Activated naive CD4-positive, alpha-beta T cell treated with anti-CD3 and anti-CD28 coated beads for 36 hours (primary cell): ENCODE measurements at regions of chr14 and their contacts with region 1.

Region 1: GRCh38 chr14:24188251-24189058 is at the start of gene IPO4:
- DNase-seq: peak; percentile 97
- H3K4me3 Mint-ChIP-seq: peak within 1 kb of the TSS; percentile 85
- H3K27ac Mint-ChIP-seq: peak within 1 kb of the TSS; percentile 78
- H3K4me1 Mint-ChIP-seq: peaks cover 46% of the 10 kb centered on the region
- H3K27me3 Mint-ChIP-seq: no peaks in the 10 kb centered on the region
- total RNA-seq, gene IPO4: 64.2 to 74.5 TPM

Region 2: GRCh38 chr14:24171422-24172260 is 16.8 kb before region 1 on chr14 and contains the start of gene REC8:
- CTCF ChIA-PET with region 1: no interaction called
- intact Hi-C with region 1: loop called (anchors 1 kb)
- DNase-seq: peak; percentile 72
- H3K4me3 Mint-ChIP-seq: peak within 1 kb of the TSS; percentile 70
- H3K27ac Mint-ChIP-seq: peak within 1 kb of the TSS; percentile 75
- H3K4me1 Mint-ChIP-seq: peaks cover 22% of the 10 kb centered on the region
- H3K27me3 Mint-ChIP-seq: no peaks in the 10 kb centered on the region
- total RNA-seq, gene REC8: 19.3 to 22.3 TPM

Region 3: DNA sequence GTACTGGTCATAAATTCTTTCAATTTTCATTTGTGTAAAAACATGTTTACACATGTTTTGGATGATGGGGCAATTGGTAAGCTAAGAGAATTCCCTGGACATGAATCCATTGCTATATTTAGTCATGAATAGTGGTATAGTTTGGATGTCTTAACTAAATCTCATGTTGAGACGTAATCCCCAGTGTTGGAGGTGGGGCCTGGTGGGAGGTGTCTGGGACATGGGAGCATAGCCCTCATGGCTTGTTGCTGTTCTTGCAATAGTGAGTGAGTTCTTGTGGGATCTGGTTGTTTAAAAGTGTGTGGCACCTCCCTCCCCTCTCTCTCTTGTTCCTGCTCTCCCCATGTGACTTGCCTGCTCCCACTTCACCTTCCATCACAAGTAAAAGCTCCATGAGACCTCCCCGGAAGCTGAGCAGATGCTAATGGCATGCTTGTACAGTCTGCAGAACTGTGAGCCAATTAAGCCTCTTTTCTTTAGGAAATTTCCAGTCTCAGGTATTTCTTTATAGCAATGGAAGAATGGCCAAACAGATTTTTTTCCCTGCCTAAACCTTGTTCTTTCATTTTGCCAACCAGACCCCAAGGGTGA is 354.0 kb after region 1 on chr14:
- CTCF ChIA-PET with region 1: no interaction called
- intact Hi-C with region 1: no loop called
- DNase-seq: no peak
- H3K4me3 Mint-ChIP-seq: no peak overlapping the region
- H3K27ac Mint-ChIP-seq: no peak overlapping the region
- H3K4me1 Mint-ChIP-seq: no peaks in the 10 kb centered on the region
- H3K27me3 Mint-ChIP-seq: peaks cover 4% of the 10 kb centered on the region